Posterior vena cava (tissue), 2 donors: ENCODE measurements at regions of chr11 and their contacts with region 1.

Region 1: DNA sequence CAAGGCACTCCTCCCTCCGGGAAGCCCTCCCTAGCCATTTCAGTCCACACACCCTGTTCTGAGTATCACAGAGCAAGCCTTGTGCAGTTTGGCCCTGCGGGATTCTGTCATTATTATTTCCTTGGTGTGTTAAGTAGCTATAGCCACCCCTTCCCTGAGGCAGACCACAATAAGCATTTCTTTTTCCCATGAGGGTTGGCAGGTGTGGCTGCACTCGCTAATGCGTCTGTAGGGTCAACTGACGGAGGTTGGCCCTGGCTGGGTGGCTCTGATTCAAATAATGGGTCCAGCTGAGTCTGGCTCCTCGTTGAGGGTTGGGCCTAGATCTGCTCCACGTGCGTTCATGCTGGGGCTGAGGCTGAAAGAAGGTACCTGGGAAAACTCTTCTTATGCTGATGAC is 5.1 kb downstream of the F2 start:
- DNase-seq: no peak

Region 2: DNA sequence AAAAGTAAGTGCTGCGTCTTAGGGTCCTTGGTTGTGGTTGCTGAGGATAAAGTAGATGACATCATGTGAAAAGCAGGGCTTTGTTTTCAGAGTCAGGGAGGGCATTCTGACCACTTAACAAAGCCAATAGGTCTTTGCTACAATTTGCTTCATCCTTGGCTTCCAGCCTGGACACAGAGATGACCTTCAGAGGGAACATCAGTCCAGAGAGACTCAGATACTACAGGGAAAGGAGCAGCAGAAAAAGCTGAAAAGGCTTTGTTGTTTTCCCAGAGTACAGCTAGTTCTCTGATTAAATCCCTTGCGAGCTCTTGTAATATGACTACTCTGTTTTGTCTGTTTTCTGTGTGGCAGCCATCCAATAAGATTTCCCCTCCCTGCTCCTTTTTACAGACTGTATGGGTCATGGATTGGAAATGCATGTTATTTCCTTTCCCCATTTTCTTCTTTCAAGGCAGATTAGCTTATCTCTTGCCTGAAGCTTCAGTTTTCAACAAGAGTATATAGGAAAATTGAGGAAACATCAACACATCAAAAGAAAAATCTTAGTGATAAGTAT is 74.8 kb before region 1 on chr11:
- intact Hi-C with region 1: loop called in 1 of 2 experiments (anchors 2 kb)
- DNase-seq: peak; percentile 76

Region 3: GRCh38 chr11:46659908-46660307 is 64.2 kb before region 1 on chr11:
- intact Hi-C with region 1: no loop called
- DNase-seq: peak; percentile 76